Activated naive CD8-positive, alpha-beta T cell treated with anti-CD3 and anti-CD28 coated beads, Interleukin-2, amount 10 ng/mL, durations not matched to agents 7 days and 5 days (primary cell): ENCODE measurements at regions of chr11 and their contacts with region 1.

Region 1: GRCh38 chr11:59106363-59107336 is at the start of gene FAM111B:
- DNase-seq: peak; percentile 75
- ATAC-seq: peak; percentile 94
- H3K4me3 Mint-ChIP-seq: peak within 1 kb of the TSS; percentile 87
- H3K27ac Mint-ChIP-seq: peak within 1 kb of the TSS; percentile 68
- H3K4me1 Mint-ChIP-seq: peaks cover 55% of the 10 kb centered on the region
- H3K27me3 Mint-ChIP-seq: no peaks in the 10 kb centered on the region
- total RNA-seq, gene FAM111B: 43.8 to 45.1 TPM

Region 2: GRCh38 chr11:58579192-58580129 is 527.2 kb before region 1 on chr11:
- POLR2A ChIA-PET with region 1: interaction called, 14 read pairs
- DNase-seq: peak; percentile 91
- ATAC-seq: peak; percentile 41
- H3K4me3 Mint-ChIP-seq: peak overlapping the region; percentile 96
- H3K27ac Mint-ChIP-seq: peak overlapping the region; percentile 97
- H3K4me1 Mint-ChIP-seq: peaks cover 45% of the 10 kb centered on the region
- H3K27me3 Mint-ChIP-seq: no peaks in the 10 kb centered on the region

Region 3: GRCh38 chr11:59135648-59136461 is 29.2 kb after region 1 on chr11:
- POLR2A ChIA-PET with region 1: interaction called, 49 read pairs
- DNase-seq: peak; percentile 91
- ATAC-seq: peak; percentile 98
- H3K4me3 Mint-ChIP-seq: peak overlapping the region; percentile 83
- H3K27ac Mint-ChIP-seq: peak overlapping the region; percentile 88
- H3K4me1 Mint-ChIP-seq: peaks cover 16% of the 10 kb centered on the region
- H3K27me3 Mint-ChIP-seq: no peaks in the 10 kb centered on the region

Region 4: DNA sequence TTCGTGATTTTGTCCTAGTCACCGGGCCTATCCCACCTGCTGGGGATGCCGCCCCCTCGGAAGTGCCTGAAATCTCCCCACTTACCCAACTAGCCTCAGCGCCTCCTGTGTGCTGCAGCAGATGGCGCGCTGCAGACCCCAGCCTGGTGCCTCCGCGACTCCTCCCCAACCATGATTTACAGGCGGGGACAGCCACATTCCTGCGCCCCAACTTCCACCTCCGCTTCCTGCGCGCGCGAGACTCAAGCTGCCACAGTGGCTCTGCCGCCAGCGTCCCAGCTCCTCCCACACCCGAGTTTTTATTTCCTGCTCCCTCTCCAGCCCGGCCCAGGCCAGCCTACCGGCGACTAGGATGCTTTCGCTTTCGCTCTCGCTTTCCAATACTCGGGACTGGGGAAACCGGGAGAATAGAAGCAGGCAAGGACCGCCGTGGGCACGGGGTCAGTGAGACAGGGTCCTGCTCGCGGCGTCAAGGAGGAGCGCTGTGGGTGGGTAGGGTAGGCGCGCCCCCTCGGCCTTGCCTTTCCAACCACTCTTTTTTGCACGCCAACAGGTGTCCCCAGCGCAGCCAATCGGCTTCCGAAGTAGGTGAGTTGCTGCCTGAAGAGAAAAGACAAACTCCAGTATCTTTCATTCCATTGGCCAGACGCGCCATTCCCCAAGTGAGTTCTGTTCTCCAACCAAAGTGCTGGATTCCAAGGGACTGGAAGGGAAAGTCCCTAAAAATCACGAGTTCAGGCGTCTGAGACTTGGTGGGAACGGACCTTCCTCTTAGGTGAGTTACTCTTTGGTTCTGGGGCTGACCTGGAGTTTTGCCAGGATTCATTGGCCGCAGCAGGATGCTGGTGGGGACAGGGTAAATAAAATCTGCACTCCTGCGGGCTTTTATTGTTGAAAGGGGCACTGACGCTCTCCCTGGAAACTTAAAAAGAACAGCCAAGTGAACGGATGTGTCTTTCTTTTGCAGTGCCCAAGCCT is 36.2 kb after region 1 on chr11 and contains the start of gene FAM111A:
- POLR2A ChIA-PET with region 1: interaction called, 49 read pairs
- DNase-seq: peak; percentile 86
- ATAC-seq: peak; percentile 89
- H3K4me3 Mint-ChIP-seq: peak within 1 kb of the TSS; percentile 92
- H3K27ac Mint-ChIP-seq: peak within 1 kb of the TSS; percentile 93
- H3K4me1 Mint-ChIP-seq: peaks cover 34% of the 10 kb centered on the region
- H3K27me3 Mint-ChIP-seq: no peaks in the 10 kb centered on the region
- total RNA-seq, gene FAM111A: 147 to 153 TPM